Activated CD4-positive, alpha-beta memory T cell treated with anti-CD3 and anti-CD28 coated beads for 36 hours (primary cell): ENCODE measurements at regions of chr11 and their contacts with region 1.

Region 1: DNA sequence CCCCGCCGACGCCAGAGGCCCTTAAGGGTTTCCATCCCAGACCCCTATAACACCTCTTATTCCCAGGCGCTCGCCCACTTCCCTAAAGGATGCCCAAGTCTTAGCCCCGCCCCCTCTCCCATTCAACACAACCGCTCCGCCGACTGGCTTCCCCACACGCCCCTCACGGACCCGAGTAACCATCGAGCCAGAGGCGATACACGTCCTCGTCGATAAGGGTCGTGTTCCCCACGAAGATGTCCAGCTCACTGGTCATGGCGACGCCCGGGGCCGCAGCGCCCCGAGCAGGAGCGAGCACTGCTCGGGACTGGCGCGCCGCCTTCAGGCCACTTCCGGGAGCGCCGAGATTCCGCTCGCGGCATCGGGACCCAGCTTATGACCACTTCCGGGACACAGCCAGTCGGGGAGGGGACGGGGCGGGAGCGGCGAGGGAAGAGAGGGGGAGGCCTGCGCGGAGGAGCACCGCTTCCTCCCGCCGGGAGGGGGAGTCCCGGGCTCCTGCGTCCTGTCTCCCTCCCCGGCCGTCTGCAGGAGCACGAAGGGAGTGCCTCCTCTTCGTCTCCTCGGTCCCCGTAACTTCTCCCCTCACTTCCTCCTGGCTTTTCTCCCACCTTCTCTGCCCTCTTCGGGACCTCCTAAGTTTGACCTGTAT is at the start of gene FIBP:
- DNase-seq: peak; percentile 98
- H3K4me3 Mint-ChIP-seq: peak within 1 kb of the TSS; percentile 99
- H3K27ac Mint-ChIP-seq: peak within 1 kb of the TSS; percentile 89
- H3K4me1 Mint-ChIP-seq: peaks cover 57% of the 10 kb centered on the region
- H3K27me3 Mint-ChIP-seq: no peaks in the 10 kb centered on the region
- total RNA-seq, gene FIBP: 94.2 to 101 TPM

Region 2: DNA sequence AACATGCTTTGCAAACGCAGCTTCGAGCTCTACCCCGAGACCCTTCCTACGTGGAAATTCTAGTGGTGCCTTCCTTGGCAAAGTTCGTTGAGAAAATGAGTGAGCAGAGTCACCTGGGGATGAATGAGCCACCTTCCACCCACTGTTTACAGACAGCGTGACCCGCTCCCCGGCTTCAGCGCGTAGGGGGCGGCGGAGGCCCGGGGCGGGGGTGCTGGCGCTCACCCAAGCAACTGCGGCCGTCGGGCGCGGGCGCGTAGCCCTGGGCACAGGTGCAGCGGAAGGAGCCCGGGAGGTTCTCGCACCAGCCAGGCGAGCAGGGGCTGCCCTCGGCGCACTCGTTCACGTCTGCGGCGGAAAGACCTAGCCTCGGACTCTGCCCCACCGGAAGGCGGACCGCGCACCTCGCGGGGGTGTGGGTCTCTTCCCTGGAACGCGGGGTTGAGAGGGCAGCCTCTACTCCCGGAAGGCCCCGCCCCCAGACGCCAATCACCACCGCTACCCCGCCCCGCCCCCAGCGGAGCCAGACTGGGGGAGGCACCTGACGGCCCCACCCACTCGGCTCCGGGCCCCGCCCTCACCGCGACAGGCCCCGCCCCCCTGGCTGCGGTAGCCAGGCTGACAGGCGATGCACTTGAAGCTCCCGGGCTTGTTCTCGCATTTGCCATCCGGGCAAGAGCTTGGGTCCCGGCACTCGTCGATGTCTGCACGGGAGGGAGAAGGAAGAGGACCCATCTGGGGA is 341.9 kb before region 1 on chr11:
- CTCF ChIA-PET with region 1: no interaction called
- POLR2A ChIA-PET with region 1: no interaction called
- intact Hi-C with region 1: no loop called
- DNase-seq: peak; percentile 99
- H3K4me3 Mint-ChIP-seq: peak overlapping the region; percentile 77
- H3K27ac Mint-ChIP-seq: peak overlapping the region; percentile 88
- H3K4me1 Mint-ChIP-seq: peaks cover 47% of the 10 kb centered on the region
- H3K27me3 Mint-ChIP-seq: no peaks in the 10 kb centered on the region

Region 3: DNA sequence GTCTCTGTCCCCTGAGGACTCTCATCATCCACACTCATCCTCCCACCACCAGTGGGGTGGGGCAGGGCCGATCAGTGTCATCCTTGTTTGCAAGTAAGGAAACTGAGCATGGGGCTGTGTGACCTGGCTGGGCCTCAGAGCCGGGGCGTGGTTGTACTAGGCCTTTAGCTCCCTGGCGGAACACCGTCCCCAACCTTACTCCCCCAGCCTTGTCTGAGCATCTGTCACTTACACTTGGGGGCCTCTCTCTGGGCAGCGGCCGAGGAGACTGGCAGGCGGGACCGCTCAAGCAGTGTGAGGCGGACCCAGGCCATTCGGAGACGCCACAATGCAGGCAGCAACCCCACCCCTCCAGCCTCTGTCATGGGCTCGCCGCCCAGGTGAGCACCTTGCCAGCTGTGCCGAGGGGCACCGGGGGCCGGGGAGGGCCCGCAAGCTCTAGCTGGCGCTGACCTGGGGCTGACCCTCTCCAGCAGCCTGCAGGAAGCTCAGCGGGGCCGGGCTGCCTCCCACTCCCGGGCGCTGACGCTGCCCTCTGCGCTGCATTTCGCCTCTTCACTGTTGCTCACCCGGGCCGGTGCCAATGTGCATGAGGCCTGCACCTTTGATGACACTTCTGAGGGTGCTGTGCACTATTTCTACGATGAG is 268.9 kb before region 1 on chr11:
- CTCF ChIA-PET with region 1: no interaction called
- POLR2A ChIA-PET with region 1: no interaction called
- intact Hi-C with region 1: no loop called
- DNase-seq: no peak
- H3K4me3 Mint-ChIP-seq: no peak overlapping the region
- H3K27ac Mint-ChIP-seq: no peak overlapping the region
- H3K4me1 Mint-ChIP-seq: peaks cover 14% of the 10 kb centered on the region
- H3K27me3 Mint-ChIP-seq: peaks cover 3% of the 10 kb centered on the region

Region 4: DNA sequence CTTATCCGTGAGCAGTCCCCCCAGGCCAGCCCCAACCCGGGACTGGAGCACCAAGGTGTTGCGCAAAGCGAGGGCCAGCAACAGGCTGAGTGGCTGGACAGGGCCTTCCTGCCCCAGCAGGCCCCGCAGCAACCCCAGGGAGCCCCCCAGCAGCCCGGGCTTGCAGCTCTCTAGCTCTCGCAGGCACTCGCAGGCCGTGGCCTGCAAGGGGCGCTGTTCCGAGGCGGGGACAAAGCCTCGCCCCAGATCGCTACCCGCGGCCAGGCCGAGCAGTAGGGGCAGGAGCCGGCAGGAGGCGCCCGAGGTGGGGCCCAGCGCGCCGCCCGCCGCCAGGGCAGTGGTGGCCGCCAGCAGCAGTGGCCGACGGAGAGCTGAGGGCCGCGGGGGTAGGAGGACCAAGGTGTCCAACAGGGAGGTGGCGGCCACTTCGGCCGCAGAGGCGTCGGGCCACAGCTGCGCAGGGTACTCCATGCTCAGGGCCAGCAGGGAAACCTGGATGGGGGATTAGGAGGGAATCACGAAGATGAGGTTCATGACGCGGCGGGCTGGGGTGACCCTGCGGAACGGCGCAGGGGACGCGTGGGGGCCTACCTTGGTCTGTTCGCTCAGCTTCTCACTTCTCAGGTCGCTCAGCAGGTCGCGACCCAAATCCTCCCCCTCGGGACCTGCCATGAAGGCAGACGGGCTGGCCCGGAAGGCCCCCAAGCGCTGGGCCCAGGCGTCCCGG is 108.3 kb before region 1 on chr11:
- CTCF ChIA-PET with region 1: interaction called, 17 read pairs
- POLR2A ChIA-PET with region 1: interaction called, 6 read pairs
- intact Hi-C with region 1: no loop called
- DNase-seq: peak; percentile 92
- H3K4me3 Mint-ChIP-seq: peak overlapping the region; percentile 87
- H3K27ac Mint-ChIP-seq: peak overlapping the region; percentile 76
- H3K4me1 Mint-ChIP-seq: peaks cover 17% of the 10 kb centered on the region
- H3K27me3 Mint-ChIP-seq: peaks cover 4% of the 10 kb centered on the region

Region 5: DNA sequence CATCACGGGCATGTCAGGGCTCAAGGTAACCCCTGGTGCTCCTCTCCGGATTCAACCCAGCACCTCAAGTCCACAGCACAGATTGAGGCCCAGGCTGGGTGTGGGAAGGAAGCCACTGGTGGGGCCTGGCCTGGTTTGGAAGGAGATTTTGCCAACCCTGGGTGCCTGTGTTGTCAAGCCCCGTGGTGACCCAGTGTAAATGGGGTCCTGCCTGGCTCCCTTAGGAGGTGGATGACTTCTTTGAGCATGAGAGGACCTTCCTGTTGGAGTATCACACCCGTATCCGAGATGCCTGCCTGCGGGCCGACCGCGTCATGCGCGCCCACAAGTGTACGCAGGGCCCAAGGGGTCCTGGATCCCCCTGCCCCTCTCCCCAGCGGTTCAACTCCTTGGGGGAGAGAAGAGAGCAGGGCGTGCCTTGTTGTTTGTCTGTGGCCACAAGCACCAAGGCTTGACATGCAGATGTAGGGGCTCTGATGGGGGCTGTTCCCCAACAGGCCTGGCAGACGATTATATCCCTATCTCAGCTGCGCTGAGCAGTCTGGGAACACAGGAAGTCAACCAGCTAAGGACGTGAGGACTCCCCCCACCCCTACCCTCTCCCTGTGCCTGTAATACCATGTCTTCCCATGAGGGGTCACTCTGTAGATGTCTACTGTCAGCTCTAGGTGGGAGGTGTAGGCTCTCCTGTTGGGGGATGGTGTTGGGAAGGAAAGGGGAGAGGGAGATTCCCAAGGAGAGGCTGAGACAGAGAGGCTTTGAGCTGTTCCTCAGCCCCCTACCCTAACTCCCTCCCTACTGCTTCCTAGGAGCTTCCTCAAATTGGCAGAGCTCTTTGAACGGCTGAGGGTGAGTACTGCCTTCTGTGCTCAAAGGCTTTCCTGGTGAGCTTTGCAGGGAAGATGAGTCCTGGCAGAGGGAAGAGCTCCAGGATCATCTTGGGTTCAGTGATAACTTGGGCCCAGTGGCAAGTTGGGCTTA is 37.2 kb before region 1 on chr11:
- CTCF ChIA-PET with region 1: interaction called, 277 read pairs
- POLR2A ChIA-PET with region 1: interaction called, 4 read pairs
- intact Hi-C with region 1: no loop called
- DNase-seq: peak; percentile 24
- H3K4me3 Mint-ChIP-seq: no peak overlapping the region
- H3K27ac Mint-ChIP-seq: no peak overlapping the region
- H3K4me1 Mint-ChIP-seq: peaks cover 22% of the 10 kb centered on the region
- H3K27me3 Mint-ChIP-seq: no peaks in the 10 kb centered on the region

Region 6: GRCh38 chr11:65900125-65900898 is 12.0 kb after region 1 on chr11 and contains the start of gene FOSL1:
- CTCF ChIA-PET with region 1: interaction called, 192 read pairs
- POLR2A ChIA-PET with region 1: interaction called, 98 read pairs
- intact Hi-C with region 1: loop called (anchors 1 kb)
- DNase-seq: peak; percentile 97
- H3K4me3 Mint-ChIP-seq: peak within 1 kb of the TSS; percentile 75
- H3K27ac Mint-ChIP-seq: peak within 1 kb of the TSS; percentile 80
- H3K4me1 Mint-ChIP-seq: peaks cover 46% of the 10 kb centered on the region
- H3K27me3 Mint-ChIP-seq: peaks cover 4% of the 10 kb centered on the region
- total RNA-seq, gene FOSL1: 17.1 to 17.7 TPM

Region 7: GRCh38 chr11:65927904-65928397 is 39.7 kb after region 1 on chr11:
- CTCF ChIA-PET with region 1: interaction called, 14 read pairs
- POLR2A ChIA-PET with region 1: no interaction called
- intact Hi-C with region 1: loop called (anchors 1 kb)
- DNase-seq: peak; percentile 89
- H3K4me3 Mint-ChIP-seq: peak overlapping the region; percentile 67
- H3K27ac Mint-ChIP-seq: peak overlapping the region; percentile 96
- H3K4me1 Mint-ChIP-seq: peaks cover 26% of the 10 kb centered on the region
- H3K27me3 Mint-ChIP-seq: no peaks in the 10 kb centered on the region

Region 8: GRCh38 chr11:65968600-65969482 is 80.6 kb after region 1 on chr11:
- CTCF ChIA-PET with region 1: interaction called, 10 read pairs
- POLR2A ChIA-PET with region 1: no interaction called
- intact Hi-C with region 1: no loop called
- DNase-seq: no peak
- H3K4me3 Mint-ChIP-seq: no peak overlapping the region
- H3K27ac Mint-ChIP-seq: peak overlapping the region; percentile 31
- H3K4me1 Mint-ChIP-seq: peaks cover 13% of the 10 kb centered on the region
- H3K27me3 Mint-ChIP-seq: no peaks in the 10 kb centered on the region

Region 9: DNA sequence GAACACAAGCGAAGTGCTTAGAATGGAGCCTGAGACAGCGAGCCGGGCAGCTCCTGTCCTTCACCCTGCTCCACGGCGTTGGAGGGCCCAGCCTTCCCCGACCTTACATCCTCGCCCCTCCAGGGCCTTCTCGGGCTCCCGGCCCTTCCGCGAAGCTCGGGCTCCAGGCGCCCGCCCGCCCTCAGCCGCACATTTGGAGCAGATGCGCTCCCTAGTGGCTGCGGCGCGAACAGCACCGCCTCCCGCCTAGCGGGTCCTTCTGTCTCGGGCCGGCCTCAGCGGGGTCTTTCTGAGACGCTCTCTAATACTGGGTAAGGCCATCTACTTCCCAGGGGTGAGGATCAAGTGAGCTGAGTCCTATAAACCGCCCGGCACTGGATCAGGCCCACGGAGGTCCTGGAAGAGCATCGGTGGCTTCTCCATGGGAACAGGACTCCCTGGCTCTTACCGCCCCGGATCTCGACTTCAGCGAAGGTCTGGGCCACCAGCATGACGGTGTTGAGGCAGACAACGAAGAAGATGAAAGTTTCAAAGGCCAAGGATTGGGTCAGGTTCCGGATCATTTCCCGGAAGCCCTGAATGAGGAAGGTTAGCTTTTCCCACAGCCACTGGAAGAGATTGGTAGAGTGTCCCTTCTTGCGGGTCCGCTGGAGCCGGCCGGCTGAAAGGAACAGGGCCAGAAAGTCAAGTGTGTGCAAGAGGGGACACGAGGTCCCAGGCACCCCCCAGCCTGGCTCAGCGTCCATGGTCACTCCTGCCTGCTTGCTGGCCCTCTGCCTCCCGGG is 134.3 kb after region 1 on chr11:
- CTCF ChIA-PET with region 1: interaction called, 22 read pairs
- POLR2A ChIA-PET with region 1: no interaction called
- intact Hi-C with region 1: no loop called
- DNase-seq: peak; percentile 85
- H3K4me3 Mint-ChIP-seq: peak overlapping the region; percentile 6
- H3K27ac Mint-ChIP-seq: no peak overlapping the region
- H3K4me1 Mint-ChIP-seq: peaks cover 17% of the 10 kb centered on the region
- H3K27me3 Mint-ChIP-seq: peaks cover 6% of the 10 kb centered on the region

Region 10: GRCh38 chr11:66100272-66101065 is 212.2 kb after region 1 on chr11:
- CTCF ChIA-PET with region 1: no interaction called
- POLR2A ChIA-PET with region 1: no interaction called
- intact Hi-C with region 1: no loop called
- DNase-seq: peak; percentile 77
- H3K4me3 Mint-ChIP-seq: peak overlapping the region; percentile 66
- H3K27ac Mint-ChIP-seq: peak overlapping the region; percentile 90
- H3K4me1 Mint-ChIP-seq: peaks cover 64% of the 10 kb centered on the region
- H3K27me3 Mint-ChIP-seq: no peaks in the 10 kb centered on the region